ENCODE measurements at regions of chr10 and their contacts with region 1.

Region 1: DNA sequence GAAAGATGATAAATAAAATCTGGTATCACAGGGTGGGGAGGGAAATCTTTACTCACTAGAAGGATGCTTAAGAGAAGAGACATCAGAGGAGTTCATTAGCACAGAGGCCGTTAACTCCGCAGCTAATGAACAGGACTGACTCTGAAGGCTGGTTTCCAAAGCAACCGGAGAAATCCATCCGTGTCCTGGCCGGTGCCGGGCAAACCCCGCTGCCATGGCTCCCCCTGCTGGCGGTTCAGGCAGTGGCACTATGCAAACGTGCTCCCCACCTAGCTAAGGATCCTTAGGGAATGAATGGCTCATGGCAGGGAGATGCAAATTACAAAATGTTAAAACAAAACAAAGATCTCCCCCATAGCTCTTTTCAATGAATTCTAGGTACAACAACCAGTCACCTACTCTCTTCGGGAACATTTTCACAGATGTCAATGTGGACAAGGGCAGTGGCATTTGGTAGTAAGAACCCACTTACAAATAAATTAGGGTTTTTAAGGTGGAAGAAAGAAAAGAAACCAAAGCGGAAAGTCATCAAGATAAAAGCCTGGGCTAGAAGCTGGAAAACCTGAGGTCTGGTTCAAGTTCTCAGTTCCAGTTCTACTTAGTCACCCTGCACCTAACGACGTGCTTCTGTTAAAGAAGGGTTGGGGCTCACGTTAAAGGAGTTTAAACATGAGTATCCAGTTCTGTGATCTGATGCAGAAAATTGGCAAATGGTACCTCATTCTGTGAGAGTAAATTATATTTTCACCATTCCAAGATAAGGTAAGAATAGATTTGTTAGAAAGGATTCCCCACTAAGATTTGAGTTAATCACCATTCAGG is 138.2 kb downstream of the SVIL start:
- DNase-seq: peak; percentile 60
- H3K4me3 ChIP-seq: no peak overlapping the region
- H3K27ac ChIP-seq: no peak overlapping the region
- H3K4me1 ChIP-seq: peaks cover 3% of the 10 kb centered on the region
- H3K27me3 ChIP-seq: no peaks in the 10 kb centered on the region
- CTCF ChIP-seq: peak; percentile 94 to 95

Region 2: GRCh38 chr10:29377333-29377961 is 119.1 kb before region 1 on chr10:
- CTCF ChIA-PET with region 1: no interaction called
- dilution Hi-C with region 1: no loop called
- in situ Hi-C with region 1: no loop called
- intact Hi-C with region 1: loop called (anchors 1 kb)
- DNase-seq: peak; percentile 8
- H3K4me3 ChIP-seq: no peak overlapping the region
- H3K27ac ChIP-seq: no peak overlapping the region
- H3K4me1 ChIP-seq: no peaks in the 10 kb centered on the region
- H3K27me3 ChIP-seq: no peaks in the 10 kb centered on the region
- CTCF ChIP-seq: peak; percentile 75 to 76

Region 3: GRCh38 chr10:29386342-29386999 is 110.1 kb before region 1 on chr10:
- CTCF ChIA-PET with region 1: interaction called, 10 read pairs
- dilution Hi-C with region 1: no loop called
- in situ Hi-C with region 1: no loop called
- intact Hi-C with region 1: no loop called
- DNase-seq: peak; percentile 11
- H3K4me3 ChIP-seq: no peak overlapping the region
- H3K27ac ChIP-seq: no peak overlapping the region
- H3K4me1 ChIP-seq: no peaks in the 10 kb centered on the region
- H3K27me3 ChIP-seq: no peaks in the 10 kb centered on the region
- CTCF ChIP-seq: peak; percentile 52 to 61

Region 4: DNA sequence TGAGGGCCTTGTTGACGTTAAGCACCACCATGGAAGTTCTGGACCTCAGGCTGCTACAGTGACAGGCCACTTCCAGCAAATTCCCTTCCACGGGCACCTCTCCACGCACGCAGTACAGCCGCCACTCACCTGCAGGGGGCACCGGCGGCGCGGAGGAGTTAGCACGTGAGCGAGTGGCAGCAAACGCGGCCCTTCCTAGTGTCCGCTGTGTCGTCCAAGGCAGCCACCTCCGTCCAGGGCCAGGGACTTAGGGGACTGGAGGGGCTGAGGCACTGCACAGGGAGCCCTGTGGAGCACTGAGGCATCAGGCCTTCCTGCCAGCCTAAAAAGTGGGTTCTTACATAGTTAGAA is 26.2 kb before region 1 on chr10:
- CTCF ChIA-PET with region 1: no interaction called
- dilution Hi-C with region 1: no loop called
- in situ Hi-C with region 1: no loop called
- intact Hi-C with region 1: loop called (anchors 2 kb)
- DNase-seq: no peak
- H3K4me3 ChIP-seq: no peak overlapping the region
- H3K27ac ChIP-seq: no peak overlapping the region
- H3K4me1 ChIP-seq: peaks cover 26% of the 10 kb centered on the region
- H3K27me3 ChIP-seq: no peaks in the 10 kb centered on the region
- CTCF ChIP-seq: peak; percentile 23 to 37

Region 5: GRCh38 chr10:31118556-31118955 is 1622.0 kb after region 1 on chr10:
- CTCF ChIA-PET with region 1: no interaction called
- dilution Hi-C with region 1: no loop called
- in situ Hi-C with region 1: no loop called
- intact Hi-C with region 1: no loop called
- DNase-seq: peak; percentile 72
- H3K4me3 ChIP-seq: no peak overlapping the region
- H3K27ac ChIP-seq: no peak overlapping the region
- H3K4me1 ChIP-seq: peaks cover 5% of the 10 kb centered on the region
- H3K27me3 ChIP-seq: no peaks in the 10 kb centered on the region
- CTCF ChIP-seq: no peak

Measured in mammary epithelial cell (primary cell).